ENCODE measurements at regions of chr2 and their contacts with region 1.

Region 1: GRCh38 chr2:170928824-170929685 is at the start of gene GORASP2:
- DNase-seq: peak; percentile 99
- H3K4me3 Mint-ChIP-seq: peak within 1 kb of the TSS; percentile 98
- H3K27ac Mint-ChIP-seq: peak within 1 kb of the TSS; percentile 96
- H3K4me1 Mint-ChIP-seq: peaks cover 39% of the 10 kb centered on the region
- H3K27me3 Mint-ChIP-seq: no peaks in the 10 kb centered on the region
- total RNA-seq, gene GORASP2: 57.1 to 60.2 TPM

Region 2: DNA sequence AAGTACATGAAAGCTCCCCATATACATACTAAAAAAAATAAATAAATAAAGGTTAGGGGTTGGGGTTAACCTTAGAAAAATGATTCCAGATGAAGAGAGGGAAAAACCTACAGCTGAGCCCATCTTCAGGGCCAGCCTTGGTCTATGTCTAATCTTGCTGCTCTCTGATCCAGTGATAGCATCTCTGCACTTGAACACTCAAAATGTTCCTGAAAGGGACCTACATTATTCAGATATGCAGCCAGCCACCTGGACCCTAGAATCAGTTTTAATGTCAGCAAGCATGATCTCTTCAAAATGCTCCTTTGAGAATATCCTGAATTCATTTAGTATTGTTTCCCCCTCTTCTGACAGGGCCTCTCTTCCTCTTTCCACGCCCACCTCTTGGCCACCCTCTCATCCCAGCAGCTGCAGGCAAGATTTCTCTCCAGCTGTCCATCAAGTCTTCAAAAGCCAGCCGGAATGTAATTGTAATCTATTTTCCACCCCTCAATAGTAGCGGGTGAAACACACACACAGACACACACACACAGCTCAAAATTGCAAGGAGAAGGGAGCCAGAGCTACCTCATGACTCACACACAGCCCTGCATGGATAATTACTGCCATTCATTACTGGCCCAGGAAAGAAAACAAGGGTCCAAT is 615.6 kb before region 1 on chr2:
- CTCF ChIA-PET with region 1: no interaction called
- intact Hi-C with region 1: no loop called
- DNase-seq: no peak
- H3K4me3 Mint-ChIP-seq: no peak overlapping the region
- H3K27ac Mint-ChIP-seq: no peak overlapping the region
- H3K4me1 Mint-ChIP-seq: no peaks in the 10 kb centered on the region
- H3K27me3 Mint-ChIP-seq: peaks cover 18% of the 10 kb centered on the region

Region 3: GRCh38 chr2:170798996-170799395 is 130.1 kb before region 1 on chr2:
- CTCF ChIA-PET with region 1: no interaction called
- intact Hi-C with region 1: no loop called
- DNase-seq: no peak
- H3K4me3 Mint-ChIP-seq: no peak overlapping the region
- H3K27ac Mint-ChIP-seq: no peak overlapping the region
- H3K4me1 Mint-ChIP-seq: no peaks in the 10 kb centered on the region
- H3K27me3 Mint-ChIP-seq: peaks cover 10% of the 10 kb centered on the region

Region 4: GRCh38 chr2:170822290-170823087 is 106.6 kb before region 1 on chr2:
- CTCF ChIA-PET with region 1: no interaction called
- intact Hi-C with region 1: loop called (anchors 5 kb)
- DNase-seq: peak; percentile 62
- H3K4me3 Mint-ChIP-seq: peak overlapping the region; percentile 27
- H3K27ac Mint-ChIP-seq: no peak overlapping the region
- H3K4me1 Mint-ChIP-seq: peaks cover 41% of the 10 kb centered on the region
- H3K27me3 Mint-ChIP-seq: peaks cover 79% of the 10 kb centered on the region

Region 5: GRCh38 chr2:171086352-171087290 is 157.6 kb after region 1 on chr2:
- CTCF ChIA-PET with region 1: interaction called, 9 read pairs
- intact Hi-C with region 1: loop called (anchors 1 kb)
- DNase-seq: peak; percentile 80
- H3K4me3 Mint-ChIP-seq: peak overlapping the region; percentile 77
- H3K27ac Mint-ChIP-seq: peak overlapping the region; percentile 74
- H3K4me1 Mint-ChIP-seq: peaks cover 65% of the 10 kb centered on the region
- H3K27me3 Mint-ChIP-seq: no peaks in the 10 kb centered on the region

Region 6: GRCh38 chr2:171260471-171261424 is 331.7 kb after region 1 on chr2:
- CTCF ChIA-PET with region 1: interaction called, 3 read pairs
- intact Hi-C with region 1: loop called (anchors 5 kb)
- DNase-seq: peak; percentile 70
- H3K4me3 Mint-ChIP-seq: no peak overlapping the region
- H3K27ac Mint-ChIP-seq: peak overlapping the region; percentile 44
- H3K4me1 Mint-ChIP-seq: peaks cover 35% of the 10 kb centered on the region
- H3K27me3 Mint-ChIP-seq: no peaks in the 10 kb centered on the region

Region 7: GRCh38 chr2:171522052-171522787 is 593.2 kb after region 1 on chr2 and contains the start of gene CYBRD1:
- CTCF ChIA-PET with region 1: no interaction called
- intact Hi-C with region 1: loop called (anchors 1 kb)
- DNase-seq: peak; percentile 25
- H3K4me3 Mint-ChIP-seq: peak within 1 kb of the TSS; percentile 79
- H3K27ac Mint-ChIP-seq: no peak within 1 kb of the TSS
- H3K4me1 Mint-ChIP-seq: peaks cover 12% of the 10 kb centered on the region
- H3K27me3 Mint-ChIP-seq: peaks cover 39% of the 10 kb centered on the region
- total RNA-seq, gene CYBRD1: 0.76 to 0.77 TPM

Region 8: DNA sequence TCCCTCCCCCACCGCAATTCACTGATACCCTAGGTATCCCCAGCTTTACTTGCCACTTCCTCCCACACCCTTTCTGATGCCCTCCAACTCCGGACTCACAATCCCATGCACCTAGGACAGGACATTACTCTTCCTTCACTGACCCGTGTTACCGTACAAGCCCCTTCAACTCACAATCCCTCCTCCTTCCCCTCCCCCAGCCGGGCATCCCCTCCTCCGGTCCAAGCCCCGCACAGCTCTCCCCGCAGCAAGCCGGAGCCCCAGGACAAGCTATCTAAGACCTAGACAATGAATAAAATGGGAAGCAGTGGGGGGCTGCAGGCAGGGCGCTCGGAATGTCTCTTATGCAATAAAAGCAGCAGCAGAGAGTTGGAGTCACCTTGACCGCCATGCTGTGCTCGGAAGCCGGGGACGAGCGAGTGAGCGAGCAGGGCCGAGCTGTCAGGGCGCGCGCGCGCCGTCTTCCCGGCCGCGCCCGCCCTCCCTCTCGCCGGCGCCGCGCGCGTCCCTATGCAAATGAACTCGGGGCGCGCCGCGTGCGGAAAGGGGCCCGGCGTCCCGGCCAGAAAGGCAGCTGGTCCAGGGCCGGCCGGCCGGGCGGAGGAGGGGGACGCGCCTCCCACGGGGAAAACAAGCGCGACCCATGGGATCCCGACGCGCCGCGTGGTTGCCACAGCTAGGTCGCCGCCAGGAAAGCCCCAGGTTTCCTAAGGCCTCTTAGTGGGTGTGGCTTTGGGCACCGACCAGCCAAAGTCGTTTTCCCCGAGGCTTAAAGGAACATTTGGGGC is 965.0 kb after region 1 on chr2 and contains the start of gene SLC25A12:
- CTCF ChIA-PET with region 1: no interaction called
- intact Hi-C with region 1: loop called (anchors 10 kb)
- DNase-seq: peak; percentile 78
- H3K4me3 Mint-ChIP-seq: peak within 1 kb of the TSS; percentile 100
- H3K27ac Mint-ChIP-seq: peak within 1 kb of the TSS; percentile 94
- H3K4me1 Mint-ChIP-seq: peaks cover 42% of the 10 kb centered on the region
- H3K27me3 Mint-ChIP-seq: no peaks in the 10 kb centered on the region
- total RNA-seq, gene SLC25A12: 15.0 to 17.4 TPM

Measured in activated naive CD4-positive, alpha-beta T cell treated with anti-CD3 and anti-CD28 coated beads for 36 hours (primary cell).